A549 (cell line): ENCODE measurements at regions of chr16 and their contacts with region 1.

Region 1: DNA sequence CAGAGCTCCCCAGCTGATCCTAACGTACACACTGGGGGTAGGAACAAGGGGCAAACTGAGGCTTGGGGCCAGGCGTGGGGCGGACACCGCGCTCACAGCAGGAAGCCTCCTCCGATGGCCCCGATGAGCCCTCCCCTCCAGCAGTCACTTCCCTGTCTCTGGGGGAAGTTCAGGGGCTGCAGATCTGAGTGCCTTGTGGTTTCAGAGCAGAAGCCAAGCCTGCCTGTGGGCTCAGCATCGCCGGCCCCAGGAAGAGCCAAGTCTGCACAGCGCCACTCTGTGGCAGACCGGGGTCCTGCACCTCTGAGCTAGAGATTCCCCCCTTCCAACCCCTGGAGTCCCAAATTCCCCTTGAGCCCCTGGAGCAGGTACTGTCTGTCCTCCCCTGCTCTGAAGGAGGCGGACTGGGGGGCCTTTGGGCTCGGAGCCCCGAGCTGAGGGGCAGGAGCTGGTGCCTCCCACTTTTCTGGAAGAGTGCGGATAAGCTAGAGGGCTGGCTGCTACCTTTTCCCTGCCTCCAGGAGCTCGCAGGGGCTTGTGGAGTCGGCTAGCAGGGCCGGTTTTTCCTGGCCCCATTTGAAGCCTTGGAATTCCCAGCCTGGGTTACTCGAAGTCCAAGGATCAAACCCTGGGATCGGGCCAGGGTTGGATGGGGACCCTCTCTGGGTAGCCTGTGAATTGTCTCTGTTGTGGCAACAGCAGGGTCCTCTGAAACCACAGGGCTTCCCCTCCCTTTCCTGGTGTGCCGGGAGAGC is 2.9 kb downstream of the GSE1 start:
- DNase-seq: peak; percentile 79 to 84
- ATAC-seq: peak in 1 of 2 experiments; percentile 37; a peak in 3 of 6 replicates
- H3K4me3 ChIP-seq: peak overlapping the region; percentile 96
- H3K27ac ChIP-seq: peak overlapping the region; percentile 98 to 99; a peak in 5 of 6 replicates
- H3K4me1 ChIP-seq: peaks cover 22% of the 10 kb centered on the region
- CTCF ChIP-seq: peak; percentile 76
- EP300 ChIP-seq: no peak
- POLR2A ChIP-seq: no peak
- RAD21 ChIP-seq: peak; percentile 53 to 55

Region 2: GRCh38 chr16:85275533-85276249 is 340.3 kb before region 1 on chr16:
- CTCF ChIA-PET with region 1: interaction called, 10 read pairs
- POLR2A ChIA-PET with region 1: no interaction called
- DNase-seq: peak; percentile 55 to 86
- ATAC-seq: peak; percentile 87 to 97
- H3K4me3 ChIP-seq: no peak overlapping the region
- H3K27ac ChIP-seq: no peak overlapping the region
- H3K4me1 ChIP-seq: no peaks in the 10 kb centered on the region
- CTCF ChIP-seq: peak; percentile 83
- EP300 ChIP-seq: no peak
- POLR2A ChIP-seq: no peak
- RAD21 ChIP-seq: peak; percentile 73 to 82

Region 3: GRCh38 chr16:85437166-85438055 is 178.6 kb before region 1 on chr16:
- CTCF ChIA-PET with region 1: interaction called, 19 read pairs
- POLR2A ChIA-PET with region 1: no interaction called
- DNase-seq: no peak
- ATAC-seq: no peak
- H3K4me3 ChIP-seq: no peak overlapping the region
- H3K27ac ChIP-seq: no peak overlapping the region
- H3K4me1 ChIP-seq: 0 out of 3 replicates have a peak, but pooled peaks cover 3% of the 10 kb centered on the region
- CTCF ChIP-seq: no peak
- EP300 ChIP-seq: no peak
- POLR2A ChIP-seq: no peak
- RAD21 ChIP-seq: no peak

Region 4: DNA sequence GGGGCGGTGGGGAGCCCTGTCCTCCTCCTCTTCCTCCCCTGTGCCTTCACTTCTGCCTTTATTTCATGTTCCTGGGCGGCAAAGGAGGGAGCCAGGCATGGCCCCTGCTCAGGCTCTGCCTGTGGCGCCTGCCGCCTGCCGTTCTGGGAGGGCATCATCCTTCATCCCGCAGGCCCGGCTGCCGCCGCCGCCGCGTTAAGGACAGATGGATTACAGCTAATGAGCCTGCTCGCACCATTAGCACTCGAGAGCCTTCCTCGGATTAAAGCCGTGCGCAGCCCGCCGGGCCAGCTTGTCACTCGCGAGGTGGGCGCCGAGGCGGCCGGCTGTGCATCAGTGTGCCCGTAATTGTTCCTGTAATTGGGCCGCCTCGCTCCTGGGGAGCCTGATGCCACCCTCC is 130.7 kb before region 1 on chr16:
- CTCF ChIA-PET with region 1: interaction called, 55 read pairs
- POLR2A ChIA-PET with region 1: no interaction called
- DNase-seq: no peak
- ATAC-seq: no peak
- H3K4me3 ChIP-seq: no peak overlapping the region
- H3K27ac ChIP-seq: no peak overlapping the region
- H3K4me1 ChIP-seq: 0 out of 3 replicates have a peak, but pooled peaks cover 2% of the 10 kb centered on the region
- CTCF ChIP-seq: no peak
- EP300 ChIP-seq: no peak
- POLR2A ChIP-seq: no peak
- RAD21 ChIP-seq: no peak

Region 5: DNA sequence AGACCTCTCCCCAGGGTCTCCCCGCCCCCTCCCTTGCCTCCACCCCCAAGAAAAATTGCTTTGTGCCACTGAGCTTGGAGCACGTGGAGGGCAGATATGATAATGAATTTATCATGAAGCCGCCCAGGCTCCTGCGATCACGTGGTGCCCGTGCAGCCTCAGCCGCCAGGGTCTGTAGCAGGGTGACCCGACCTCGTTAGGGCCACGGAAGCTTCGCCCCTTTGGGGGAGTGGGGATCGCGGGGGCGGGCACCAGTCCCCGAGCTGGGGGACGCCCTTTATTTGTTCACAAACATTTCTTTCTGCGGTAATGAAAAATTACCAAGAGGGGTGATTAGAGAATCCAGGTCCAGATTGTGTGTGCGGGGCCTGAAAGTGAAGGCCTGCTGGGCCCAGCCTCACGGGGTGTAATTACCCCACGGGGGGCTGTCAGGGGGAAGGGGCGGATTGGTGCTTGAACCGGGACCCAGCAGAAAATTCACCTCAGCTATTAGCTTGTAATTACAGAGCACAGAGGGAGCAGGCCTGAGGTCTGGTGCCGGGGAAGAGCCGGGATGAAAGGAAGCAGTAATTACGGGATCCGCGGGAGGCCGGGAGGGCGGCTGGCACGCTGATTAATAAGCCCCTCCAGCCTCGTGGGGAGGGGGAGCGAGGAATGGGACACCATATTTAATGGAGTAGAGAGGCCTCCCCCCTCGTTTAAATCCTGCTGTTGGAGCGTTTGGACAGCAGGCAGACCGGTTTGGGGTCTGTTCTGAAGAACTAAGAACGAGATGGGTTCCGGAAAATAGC is 10.4 kb after region 1 on chr16:
- CTCF ChIA-PET with region 1: interaction called, 93 read pairs
- POLR2A ChIA-PET with region 1: interaction called, 3 read pairs
- DNase-seq: no peak
- ATAC-seq: no peak
- H3K4me3 ChIP-seq: no peak overlapping the region
- H3K27ac ChIP-seq: no peak overlapping the region
- H3K4me1 ChIP-seq: peaks cover 12% of the 10 kb centered on the region
- CTCF ChIP-seq: no peak
- EP300 ChIP-seq: no peak
- POLR2A ChIP-seq: no peak
- RAD21 ChIP-seq: no peak

Region 6: GRCh38 chr16:85659805-85660495 is 43.9 kb after region 1 on chr16:
- CTCF ChIA-PET with region 1: interaction called, 24 read pairs
- POLR2A ChIA-PET with region 1: interaction called, 3 read pairs
- DNase-seq: peak; percentile 58 to 88
- ATAC-seq: peak; percentile 76 to 87
- H3K4me3 ChIP-seq: no peak overlapping the region
- H3K27ac ChIP-seq: no peak overlapping the region
- H3K4me1 ChIP-seq: no peaks in the 10 kb centered on the region
- CTCF ChIP-seq: peak; percentile 72
- EP300 ChIP-seq: no peak
- POLR2A ChIP-seq: no peak
- RAD21 ChIP-seq: peak; percentile 43 to 61; a peak in 3 of 5 replicates

Region 7: GRCh38 chr16:85709766-85710585 is 93.9 kb after region 1 on chr16:
- CTCF ChIA-PET with region 1: no interaction called
- POLR2A ChIA-PET with region 1: no interaction called
- DNase-seq: no peak
- ATAC-seq: no peak
- H3K4me3 ChIP-seq: no peak overlapping the region
- H3K27ac ChIP-seq: no peak overlapping the region
- H3K4me1 ChIP-seq: no peaks in the 10 kb centered on the region
- CTCF ChIP-seq: no peak
- EP300 ChIP-seq: no peak
- POLR2A ChIP-seq: no peak
- RAD21 ChIP-seq: no peak

Region 8: GRCh38 chr16:85724936-85725335 is 108.9 kb after region 1 on chr16:
- CTCF ChIA-PET with region 1: no interaction called
- POLR2A ChIA-PET with region 1: no interaction called
- DNase-seq: no peak
- ATAC-seq: no peak
- H3K4me3 ChIP-seq: no peak overlapping the region
- H3K27ac ChIP-seq: no peak overlapping the region
- H3K4me1 ChIP-seq: no peaks in the 10 kb centered on the region
- CTCF ChIP-seq: no peak
- EP300 ChIP-seq: no peak
- POLR2A ChIP-seq: no peak
- RAD21 ChIP-seq: no peak

Region 9: DNA sequence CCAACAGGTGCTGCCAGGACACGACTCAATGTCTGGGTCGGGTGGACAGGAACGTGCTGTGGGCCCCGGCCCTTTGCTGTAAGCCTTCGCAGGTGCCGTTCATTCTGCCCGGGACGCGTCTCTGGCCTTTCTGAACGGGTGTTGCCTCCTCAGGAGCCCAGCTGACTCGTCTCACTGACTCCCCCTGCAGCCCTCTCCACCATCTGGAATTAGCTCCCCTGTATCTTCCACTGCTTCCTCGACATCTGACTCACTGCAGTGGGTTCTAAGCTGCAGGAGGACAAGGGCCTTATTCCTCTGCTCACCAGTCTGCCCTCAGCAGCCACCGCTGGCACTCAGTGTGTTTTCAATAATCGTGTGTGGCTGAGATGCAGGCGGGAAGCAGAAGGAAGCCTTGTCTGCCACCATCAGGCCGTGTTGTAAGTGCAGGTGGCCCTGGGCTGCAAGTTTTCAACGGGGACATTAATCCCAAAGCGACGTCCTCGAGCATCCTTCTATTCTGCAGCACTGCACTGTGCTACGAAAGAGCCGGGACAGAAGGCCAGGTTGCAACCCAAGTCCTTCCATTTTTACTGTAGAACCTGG is 1218.5 kb after region 1 on chr16:
- CTCF ChIA-PET with region 1: no interaction called
- POLR2A ChIA-PET with region 1: no interaction called
- DNase-seq: peak in 1 of 2 experiments; percentile 19
- ATAC-seq: peak; percentile 67 to 69; a peak in 5 of 6 replicates
- H3K4me3 ChIP-seq: no peak overlapping the region
- H3K27ac ChIP-seq: no peak overlapping the region
- H3K4me1 ChIP-seq: no peaks in the 10 kb centered on the region
- CTCF ChIP-seq: peak; percentile 1; the same call in 1 of the 3 replicates
- EP300 ChIP-seq: no peak
- POLR2A ChIP-seq: no peak
- RAD21 ChIP-seq: peak; percentile 21 to 38